CD4-positive, alpha-beta memory T cell (primary cell): ENCODE measurements at regions of chr4 and their contacts with region 1.

Region 1: DNA sequence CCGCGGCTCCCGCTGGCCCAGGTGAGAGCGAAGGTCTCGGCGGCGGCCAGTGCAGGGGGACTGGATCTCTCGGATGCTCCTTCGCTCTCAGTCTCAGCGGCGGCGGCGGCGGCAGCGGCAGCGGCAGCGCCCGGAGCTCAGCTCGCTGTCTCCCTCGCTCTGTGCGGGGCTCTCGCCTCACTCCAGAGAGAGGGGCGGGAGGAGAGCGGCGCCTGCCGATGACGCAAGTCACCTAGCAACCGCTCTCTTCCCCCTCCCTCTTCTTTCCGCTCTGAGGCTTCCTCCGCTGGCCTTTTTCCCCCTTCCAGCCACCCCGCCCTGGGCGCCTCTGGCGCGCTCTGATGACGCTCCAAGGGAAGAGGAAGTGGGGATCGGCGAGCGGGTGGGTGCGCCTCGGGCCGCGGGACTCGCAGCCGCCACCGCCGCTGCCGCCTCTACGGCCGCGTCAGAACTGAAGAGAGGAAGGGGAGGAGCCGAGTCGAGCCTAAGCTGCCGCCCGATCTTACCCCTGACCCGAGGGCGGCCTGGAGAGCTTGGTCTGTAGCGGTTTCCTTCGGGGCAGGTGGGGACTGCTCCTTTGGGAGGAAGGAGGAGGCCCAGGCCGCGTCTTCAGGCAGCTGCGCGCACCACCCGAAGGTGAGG is at the start of gene FBXW7:
- DNase-seq: peak; percentile 99 to 100 (median 100)
- H3K4me3 ChIP-seq: peak within 1 kb of the TSS; percentile 66 to 93
- H3K4me3 Mint-ChIP-seq: peak within 1 kb of the TSS; percentile 96 to 99 (median 98)
- H3K27ac ChIP-seq: peak within 1 kb of the TSS; percentile 87
- H3K27ac Mint-ChIP-seq: peak within 1 kb of the TSS; percentile 93 to 100 (median 99)
- H3K4me1 ChIP-seq: peaks cover 72% of the 10 kb centered on the region
- H3K4me1 Mint-ChIP-seq: peaks cover 43 to 77% (median 62%) of the 10 kb centered on the region in 4 donors
- H3K27me3 ChIP-seq: no peaks in the 10 kb centered on the region
- H3K27me3 Mint-ChIP-seq: no peaks in the 10 kb centered on the region
- total RNA-seq, gene FBXW7: 138 to 148 TPM

Region 2: DNA sequence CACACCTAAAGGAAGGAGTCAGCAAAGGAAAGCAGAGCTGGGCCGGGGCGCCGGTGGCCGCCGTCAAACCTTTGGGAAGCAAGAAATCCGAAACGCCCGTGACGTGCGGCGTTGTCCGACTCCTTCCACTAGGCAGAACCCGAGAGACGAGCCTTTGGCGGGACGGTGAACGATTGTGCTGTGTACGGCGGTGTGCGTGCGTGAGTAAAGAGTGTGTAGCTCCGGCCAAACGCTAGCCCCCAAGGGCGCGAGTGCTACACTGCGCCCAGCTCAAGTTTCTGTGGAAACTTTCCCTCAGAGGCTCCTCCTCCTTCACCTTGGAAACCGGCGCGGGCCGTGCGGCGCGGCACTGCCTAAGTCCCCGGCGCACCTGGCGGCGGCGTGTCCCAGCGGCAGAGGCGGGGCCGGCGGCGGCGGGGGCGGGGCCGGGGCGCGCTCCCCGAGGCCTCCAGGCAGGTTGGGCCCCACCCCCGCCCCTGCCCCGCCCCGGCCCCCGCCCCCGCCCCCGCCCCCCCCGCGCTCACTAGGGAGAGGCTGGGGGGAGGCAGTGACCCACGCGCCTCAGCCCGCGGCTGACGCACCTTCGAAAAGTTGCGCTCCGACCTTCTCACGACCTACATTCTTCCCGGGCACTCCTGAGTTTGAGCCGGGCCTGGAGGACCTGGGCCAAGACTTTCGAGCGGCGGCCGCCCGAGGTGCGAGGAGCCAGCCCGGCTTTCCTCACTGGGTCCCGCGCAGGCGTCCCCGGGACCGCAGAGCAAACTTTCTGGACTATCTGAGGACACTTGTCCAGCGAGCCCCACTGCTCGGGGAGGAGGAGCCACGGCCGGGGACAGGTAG is 1127.2 kb before region 1 on chr4 and contains the start of gene FHIP1A:
- CTCF ChIA-PET with region 1: no interaction called
- POLR2A ChIA-PET with region 1: no interaction called
- intact Hi-C with region 1: loop called (anchors 1 kb)
- DNase-seq: peak; percentile 84 to 91 (median 87)
- H3K4me3 ChIP-seq: peak within 1 kb of the TSS; percentile 62 to 90
- H3K4me3 Mint-ChIP-seq: peak within 1 kb of the TSS; percentile 90 to 99 (median 94)
- H3K27ac ChIP-seq: peak within 1 kb of the TSS; percentile 41
- H3K27ac Mint-ChIP-seq: peak within 1 kb of the TSS; percentile 85 to 95 (median 91)
- H3K4me1 ChIP-seq: peaks cover 24% of the 10 kb centered on the region
- H3K4me1 Mint-ChIP-seq: peaks cover 16 to 30% (median 22%) of the 10 kb centered on the region in 4 donors
- H3K27me3 ChIP-seq: no peaks in the 10 kb centered on the region
- H3K27me3 Mint-ChIP-seq: no peaks in the 10 kb centered on the region
- total RNA-seq, gene FHIP1A: 2.6 to 3.2 TPM

Region 3: DNA sequence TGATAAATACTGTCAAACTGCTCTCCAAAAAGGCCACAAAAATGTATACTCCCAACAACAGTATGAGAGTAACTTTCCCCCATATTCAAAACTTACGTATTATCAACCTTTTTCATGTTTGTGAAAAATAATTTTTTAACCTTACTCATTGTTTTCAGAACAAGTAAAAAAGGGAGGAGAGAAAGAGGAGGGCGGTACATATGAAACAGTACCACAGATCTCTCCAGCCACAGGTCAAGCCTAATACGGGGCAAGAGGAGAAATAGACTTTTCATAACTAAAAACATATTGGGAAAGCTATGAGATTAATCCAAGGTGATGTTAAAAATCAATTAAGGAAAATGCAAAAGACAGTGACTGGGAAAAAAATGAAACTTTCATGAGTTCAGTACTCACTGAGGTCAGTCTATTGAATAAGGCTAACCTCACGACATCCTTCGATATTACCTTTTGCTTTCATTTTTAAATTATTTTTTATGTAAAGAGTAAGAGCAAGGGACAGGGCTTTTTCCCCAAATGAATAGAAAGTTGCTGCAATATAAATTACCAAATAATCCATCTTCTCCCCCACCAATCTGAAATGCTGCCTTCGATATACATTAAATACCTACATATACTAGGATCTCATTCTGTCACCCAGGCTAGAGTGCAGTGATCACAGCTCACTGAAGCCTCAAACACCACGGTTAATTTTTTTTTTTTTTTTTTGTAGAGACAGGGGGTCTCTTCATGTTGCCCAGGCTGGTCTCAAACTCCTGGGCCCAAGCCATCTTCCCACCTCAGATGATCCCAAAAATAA is 25.5 kb before region 1 on chr4:
- CTCF ChIA-PET with region 1: interaction called, 8 read pairs
- POLR2A ChIA-PET with region 1: interaction called, 15 read pairs
- intact Hi-C with region 1: loop called (anchors 1 kb)
- DNase-seq: peak in 1 of 5 donors; percentile 6
- H3K4me3 ChIP-seq: no peak overlapping the region
- H3K4me3 Mint-ChIP-seq: peak overlapping the region; percentile 68 to 89 (median 76)
- H3K27ac ChIP-seq: peak overlapping the region; percentile 15
- H3K27ac Mint-ChIP-seq: peak overlapping the region; percentile 62 to 90 (median 72)
- H3K4me1 ChIP-seq: peaks cover 44% of the 10 kb centered on the region
- H3K4me1 Mint-ChIP-seq: peaks cover 44 to 72% (median 61%) of the 10 kb centered on the region in 4 donors
- H3K27me3 ChIP-seq: no peaks in the 10 kb centered on the region
- H3K27me3 Mint-ChIP-seq: no peaks in the 10 kb centered on the region

Region 4: GRCh38 chr4:152564344-152564743 is 28.3 kb after region 1 on chr4:
- CTCF ChIA-PET with region 1: interaction called, 3 read pairs
- POLR2A ChIA-PET with region 1: interaction called, 12 read pairs
- intact Hi-C with region 1: no loop called
- DNase-seq: no peak
- H3K4me3 ChIP-seq: no peak overlapping the region
- H3K4me3 Mint-ChIP-seq: no peak overlapping the region
- H3K27ac ChIP-seq: no peak overlapping the region
- H3K27ac Mint-ChIP-seq: no peak overlapping the region
- H3K4me1 ChIP-seq: no peaks in the 10 kb centered on the region
- H3K4me1 Mint-ChIP-seq: peaks cover 1 to 8% (median 5%) of the 10 kb centered on the region in 4 donors
- H3K27me3 ChIP-seq: no peaks in the 10 kb centered on the region
- H3K27me3 Mint-ChIP-seq: no peaks in the 10 kb centered on the region

Region 5: GRCh38 chr4:152605641-152606335 is 69.8 kb after region 1 on chr4:
- CTCF ChIA-PET with region 1: no interaction called
- POLR2A ChIA-PET with region 1: interaction called, 44 read pairs
- intact Hi-C with region 1: no loop called
- DNase-seq: no peak
- H3K4me3 ChIP-seq: no peak overlapping the region
- H3K4me3 Mint-ChIP-seq: no peak overlapping the region
- H3K27ac ChIP-seq: no peak overlapping the region
- H3K27ac Mint-ChIP-seq: peak overlapping the region in 4 of 7 donors; percentile 10 to 91 (median 66)
- H3K4me1 ChIP-seq: peaks cover 15% of the 10 kb centered on the region
- H3K4me1 Mint-ChIP-seq: peaks cover 8 to 18% (median 10%) of the 10 kb centered on the region in 4 donors
- H3K27me3 ChIP-seq: no peaks in the 10 kb centered on the region
- H3K27me3 Mint-ChIP-seq: no peaks in the 10 kb centered on the region

Region 6: GRCh38 chr4:152779513-152780266 is 243.7 kb after region 1 on chr4 and contains the starts of genes ARFIP1 and TIGD4:
- CTCF ChIA-PET with region 1: interaction called, 3 read pairs
- POLR2A ChIA-PET with region 1: interaction called, 13 read pairs
- intact Hi-C with region 1: loop called (anchors 1 kb)
- DNase-seq: peak; percentile 93 to 95 (median 94)
- H3K4me3 ChIP-seq: peak within 1 kb of the TSS; percentile 94 to 96
- H3K4me3 Mint-ChIP-seq: peak within 1 kb of the TSS; percentile 92 to 100 (median 99)
- H3K27ac ChIP-seq: peak within 1 kb of the TSS; percentile 78
- H3K27ac Mint-ChIP-seq: peak within 1 kb of the TSS; percentile 93 to 99 (median 98)
- H3K4me1 ChIP-seq: peaks cover 27% of the 10 kb centered on the region
- H3K4me1 Mint-ChIP-seq: peaks cover 28 to 49% (median 40%) of the 10 kb centered on the region in 4 donors
- H3K27me3 ChIP-seq: no peaks in the 10 kb centered on the region
- H3K27me3 Mint-ChIP-seq: peaks cover 0 to 2% of the 10 kb centered on the region in 2 donors
- total RNA-seq, gene ARFIP1: 12.5 to 16.5 TPM
- total RNA-seq, gene TIGD4: 0.12 to 0.17 TPM